Mammary epithelial cell (primary cell): ENCODE measurements at regions of chr20 and their contacts with region 1.

Region 1: GRCh38 chr20:31806564-31807355 is 12.4 kb upstream of the MYLK2 start:
- DNase-seq: no peak
- H3K4me3 ChIP-seq: no peak overlapping the region
- H3K27ac ChIP-seq: no peak overlapping the region
- H3K4me1 ChIP-seq: peaks cover 6% of the 10 kb centered on the region
- H3K27me3 ChIP-seq: no peaks in the 10 kb centered on the region
- CTCF ChIP-seq: no peak

Region 2: DNA sequence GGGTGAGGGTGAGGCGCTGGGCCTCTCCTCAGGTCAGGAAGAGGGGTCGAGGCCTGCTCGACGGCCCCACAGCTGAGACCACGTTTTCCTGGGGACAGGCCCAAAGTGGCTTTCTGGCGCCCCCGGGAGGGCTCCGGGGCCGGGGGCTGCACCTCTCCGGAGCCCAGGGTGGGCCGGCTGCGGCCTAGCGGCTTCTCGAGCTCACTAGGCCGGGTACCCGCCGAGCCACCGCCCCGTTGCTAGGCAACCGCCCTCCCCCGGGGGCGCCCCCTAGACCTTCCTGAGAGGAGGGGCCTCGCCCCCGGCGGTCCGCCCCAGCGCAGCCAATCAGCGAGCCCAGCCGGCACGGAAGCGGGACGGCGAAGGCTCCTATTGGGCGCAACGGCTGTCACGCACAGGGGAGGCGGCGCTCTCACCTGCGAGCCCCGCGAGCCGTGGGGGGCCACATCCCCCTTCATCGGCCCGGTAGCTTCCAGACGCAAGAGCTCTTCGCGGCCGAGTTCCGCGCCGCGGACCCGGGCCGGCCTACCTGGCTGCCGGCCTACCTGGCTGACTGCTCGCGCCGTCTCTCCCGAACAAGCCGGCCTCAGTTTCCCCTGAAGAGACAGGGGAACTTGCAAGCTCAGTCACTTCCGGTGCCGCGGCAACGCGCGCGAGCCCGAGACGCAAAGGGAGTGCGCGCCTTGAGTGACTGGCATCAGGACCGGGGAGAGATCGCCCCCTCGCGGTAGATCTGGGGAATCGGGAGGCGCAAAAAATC is 83.3 kb before region 1 on chr20:
- CTCF ChIA-PET with region 1: no interaction called
- dilution Hi-C with region 1: no loop called
- in situ Hi-C with region 1: no loop called
- intact Hi-C with region 1: no loop called
- DNase-seq: peak; percentile 96
- H3K4me3 ChIP-seq: peak overlapping the region; percentile 78 to 89 (median 86)
- H3K27ac ChIP-seq: peak overlapping the region; percentile 89
- H3K4me1 ChIP-seq: peaks cover 26% of the 10 kb centered on the region
- H3K27me3 ChIP-seq: no peaks in the 10 kb centered on the region
- CTCF ChIP-seq: peak; percentile 89 to 93

Region 3: GRCh38 chr20:31770243-31770642 is 36.5 kb before region 1 on chr20:
- CTCF ChIA-PET with region 1: no interaction called
- dilution Hi-C with region 1: loop called (anchors 5 kb)
- in situ Hi-C with region 1: no loop called
- intact Hi-C with region 1: no loop called
- DNase-seq: no peak
- H3K4me3 ChIP-seq: no peak overlapping the region
- H3K27ac ChIP-seq: no peak overlapping the region
- H3K4me1 ChIP-seq: no peaks in the 10 kb centered on the region
- H3K27me3 ChIP-seq: no peaks in the 10 kb centered on the region
- CTCF ChIP-seq: no peak

Region 4: DNA sequence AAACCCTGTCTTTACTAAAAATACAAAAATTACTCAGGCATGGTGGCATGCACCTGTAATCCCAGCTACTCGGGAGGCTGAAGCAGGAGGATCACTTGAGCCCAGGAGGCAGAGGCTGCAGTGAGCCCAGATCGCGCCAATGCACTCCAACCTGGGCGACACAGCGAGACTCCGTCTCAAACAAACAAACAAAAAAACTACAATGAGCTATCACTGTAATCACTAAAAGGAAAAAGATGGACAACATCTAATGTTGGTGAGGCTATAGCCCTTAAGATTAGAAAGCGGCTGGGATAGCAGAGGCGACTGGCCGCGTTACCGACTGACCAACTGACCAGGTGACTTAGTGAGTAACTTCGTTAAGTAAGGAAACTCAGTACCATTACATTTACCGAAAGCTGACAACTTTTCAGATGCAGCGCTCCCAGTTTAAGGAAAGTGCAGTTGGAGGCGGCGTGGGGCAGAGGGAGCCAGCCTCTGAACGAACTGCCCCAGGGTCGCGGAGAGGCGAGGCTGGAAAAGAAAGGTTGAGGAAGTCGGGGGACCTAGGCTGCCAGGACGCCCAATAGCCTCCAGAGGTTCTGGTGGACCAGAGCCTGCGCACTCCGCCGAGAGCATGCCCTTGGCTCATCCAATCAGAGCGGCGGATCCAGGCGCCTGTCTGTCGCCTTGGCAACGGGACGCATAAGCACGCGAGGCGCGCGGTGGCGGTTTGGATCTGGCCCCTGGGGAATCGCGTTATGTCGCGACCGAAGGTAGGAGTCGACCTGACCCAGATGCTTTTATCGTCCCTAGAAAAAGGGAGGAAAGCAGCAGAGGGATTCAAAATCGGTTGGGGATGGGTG is 72.6 kb after region 1 on chr20:
- CTCF ChIA-PET with region 1: no interaction called
- dilution Hi-C with region 1: no loop called
- in situ Hi-C with region 1: no loop called
- intact Hi-C with region 1: no loop called
- DNase-seq: peak; percentile 91
- H3K4me3 ChIP-seq: peak overlapping the region; percentile 55 to 69 (median 58)
- H3K27ac ChIP-seq: peak overlapping the region; percentile 64
- H3K4me1 ChIP-seq: no peaks in the 10 kb centered on the region
- H3K27me3 ChIP-seq: no peaks in the 10 kb centered on the region
- CTCF ChIP-seq: peak in 1 of 2 donors; percentile 4

Region 5: GRCh38 chr20:31894980-31895675 is 88.4 kb after region 1 on chr20:
- CTCF ChIA-PET with region 1: no interaction called
- dilution Hi-C with region 1: no loop called
- in situ Hi-C with region 1: no loop called
- intact Hi-C with region 1: no loop called
- DNase-seq: peak; percentile 48
- H3K4me3 ChIP-seq: no peak overlapping the region
- H3K27ac ChIP-seq: no peak overlapping the region
- H3K4me1 ChIP-seq: no peaks in the 10 kb centered on the region
- H3K27me3 ChIP-seq: no peaks in the 10 kb centered on the region
- CTCF ChIP-seq: no peak

Region 6: GRCh38 chr20:32034581-32035425 is 228.0 kb after region 1 on chr20:
- CTCF ChIA-PET with region 1: no interaction called
- dilution Hi-C with region 1: no loop called
- in situ Hi-C with region 1: no loop called
- intact Hi-C with region 1: no loop called
- DNase-seq: no peak
- H3K4me3 ChIP-seq: no peak overlapping the region
- H3K27ac ChIP-seq: no peak overlapping the region
- H3K4me1 ChIP-seq: peaks cover 5% of the 10 kb centered on the region
- H3K27me3 ChIP-seq: no peaks in the 10 kb centered on the region
- CTCF ChIP-seq: peak in 1 of 2 donors; percentile 22